HepG2 (cell line): ENCODE measurements at regions of chr16 and their contacts with region 1.

Region 1: DNA sequence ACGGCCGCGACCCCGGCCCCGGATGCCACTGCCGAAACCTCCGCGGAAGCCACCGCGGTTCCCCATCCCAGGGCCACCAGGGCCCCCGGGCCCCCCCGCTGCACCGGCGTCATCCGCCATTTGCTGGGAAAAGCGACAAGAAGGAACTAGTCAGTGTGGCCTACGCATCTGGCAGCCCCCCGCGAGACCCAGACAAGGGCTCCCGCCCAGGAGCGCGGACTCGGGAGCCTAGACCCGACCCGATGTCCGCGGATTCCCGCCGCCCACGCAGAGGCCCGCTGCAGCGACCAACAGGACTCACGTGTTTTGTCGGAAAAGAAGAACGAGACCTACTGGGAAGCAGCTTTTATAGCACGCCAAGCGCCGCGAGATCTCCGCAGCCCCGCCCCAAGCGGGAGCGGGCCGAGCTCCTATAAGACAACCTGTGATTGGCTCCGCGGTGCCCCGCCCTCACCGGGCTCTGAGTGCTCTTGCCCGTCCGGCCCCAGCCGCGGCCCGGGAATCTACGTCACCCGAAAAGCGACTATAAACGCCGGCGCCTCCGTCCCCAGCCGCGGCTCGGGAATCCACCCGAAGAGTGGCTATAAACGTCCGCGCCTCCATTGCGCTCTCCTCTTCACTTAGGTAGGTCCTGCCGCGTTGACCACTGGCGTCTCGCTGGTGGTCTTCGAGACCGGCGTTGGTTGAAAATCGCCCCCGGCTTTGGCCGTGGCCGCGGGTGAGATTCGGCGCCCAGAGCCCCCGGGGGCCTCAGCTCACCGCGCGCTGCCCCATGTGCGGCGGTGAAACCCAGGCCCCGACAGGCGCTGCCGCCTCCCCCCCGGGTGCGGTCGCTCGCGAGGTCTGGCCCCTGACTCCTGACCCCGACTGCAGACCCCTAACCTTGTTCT is at the start of gene RPS2:
- DNase-seq: peak; percentile 97
- ATAC-seq: peak; percentile 61
- H3K4me3 ChIP-seq: peak within 1 kb of the TSS; percentile 84 to 94 (median 92)
- H3K27ac ChIP-seq: peak within 1 kb of the TSS; percentile 88
- H3K4me1 ChIP-seq: peaks cover 44% of the 10 kb centered on the region
- H3K27me3 ChIP-seq: no peaks in the 10 kb centered on the region; a peak in 1 of 5 replicates
- CTCF ChIP-seq: peak; percentile 2; the same call in 1 of the 2 replicates
- EP300 ChIP-seq: peak in 1 of 2 experiments; percentile 26; a peak in 1 of 4 replicates
- POLR2A ChIP-seq: peak; percentile 100
- RAD21 ChIP-seq: peak; percentile 25
- total RNA-seq, gene RPS2: 1,908 and 1,988 TPM in 2 replicates

Region 2: GRCh38 chr16:1826691-1827575 is 137.8 kb before region 1 on chr16 and contains the starts of genes FAHD1 and HAGH:
- CTCF ChIA-PET with region 1: no interaction called
- POLR2A ChIA-PET with region 1: interaction called, 13 read pairs
- in situ Hi-C with region 1: no loop called
- intact Hi-C with region 1: no loop called
- DNase-seq: peak; percentile 88
- ATAC-seq: peak; percentile 77
- H3K4me3 ChIP-seq: peak within 1 kb of the TSS; percentile 72 to 97 (median 92)
- H3K27ac ChIP-seq: peak within 1 kb of the TSS; percentile 93
- H3K4me1 ChIP-seq: peaks cover 54% of the 10 kb centered on the region
- H3K27me3 ChIP-seq: no peaks in the 10 kb centered on the region; a peak in 1 of 5 replicates
- CTCF ChIP-seq: 0 out of 2 replicates have a peak, but pooled peaks have one; percentile 3
- EP300 ChIP-seq: peak; percentile 35 to 36; a peak in 2 of 4 replicates
- POLR2A ChIP-seq: peak; percentile 84 to 90
- RAD21 ChIP-seq: no peak; the same call in none of the 2 replicates
- total RNA-seq, gene FAHD1: 45.3 and 55.1 TPM in 2 replicates
- total RNA-seq, gene HAGH: 55.6 and 70.4 TPM in 2 replicates

Region 3: DNA sequence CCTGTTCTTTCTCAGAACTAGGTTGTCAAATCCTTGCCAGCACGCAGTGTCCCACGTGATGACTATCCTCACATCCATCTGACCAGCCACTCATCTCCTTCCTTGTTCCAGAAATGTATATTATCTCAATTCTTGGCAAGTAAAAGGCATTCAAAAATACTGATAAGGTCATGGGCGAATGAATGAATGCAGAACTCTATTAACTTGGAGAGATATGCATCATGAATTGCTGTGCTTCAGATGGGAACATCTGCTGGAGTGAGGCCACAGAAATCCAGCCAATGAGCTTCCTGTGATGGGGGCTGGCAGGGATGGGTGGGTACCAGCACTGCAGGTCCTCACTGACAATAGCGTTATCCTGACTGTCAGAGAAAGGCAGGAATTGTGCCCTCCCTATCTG is 118.8 kb before region 1 on chr16:
- CTCF ChIA-PET with region 1: no interaction called
- POLR2A ChIA-PET with region 1: no interaction called
- in situ Hi-C with region 1: no loop called
- intact Hi-C with region 1: no loop called
- DNase-seq: no peak
- ATAC-seq: no peak
- H3K4me3 ChIP-seq: no peak overlapping the region
- H3K27ac ChIP-seq: no peak overlapping the region
- H3K4me1 ChIP-seq: peaks cover 3% of the 10 kb centered on the region
- H3K27me3 ChIP-seq: no peaks in the 10 kb centered on the region
- CTCF ChIP-seq: no peak
- EP300 ChIP-seq: no peak
- POLR2A ChIP-seq: no peak
- RAD21 ChIP-seq: no peak

Region 4: GRCh38 chr16:1942810-1943726 is 21.7 kb before region 1 on chr16 and contains the start of gene MSRB1:
- CTCF ChIA-PET with region 1: no interaction called
- POLR2A ChIA-PET with region 1: interaction called, 139 read pairs
- in situ Hi-C with region 1: no loop called
- intact Hi-C with region 1: loop called (anchors 2 kb)
- DNase-seq: peak; percentile 98
- ATAC-seq: peak; percentile 56
- H3K4me3 ChIP-seq: peak within 1 kb of the TSS; percentile 93 to 97 (median 96)
- H3K27ac ChIP-seq: peak within 1 kb of the TSS; percentile 96
- H3K4me1 ChIP-seq: peaks cover 68% of the 10 kb centered on the region
- H3K27me3 ChIP-seq: peaks cover 0 to 5% of the 10 kb centered on the region in 2 experiments; a peak in 1 of 5 replicates
- CTCF ChIP-seq: peak; percentile 19; the same call in 1 of the 2 replicates
- EP300 ChIP-seq: no peak
- POLR2A ChIP-seq: peak; percentile 95
- RAD21 ChIP-seq: no peak
- total RNA-seq, gene MSRB1: 32.1 and 49.0 TPM in 2 replicates

Region 5: GRCh38 chr16:1983544-1984346 is 19.0 kb after region 1 on chr16 and contains the start of gene GFER:
- CTCF ChIA-PET with region 1: no interaction called
- POLR2A ChIA-PET with region 1: interaction called, 62 read pairs
- in situ Hi-C with region 1: no loop called
- intact Hi-C with region 1: no loop called
- DNase-seq: peak; percentile 81
- ATAC-seq: peak; percentile 82
- H3K4me3 ChIP-seq: peak within 1 kb of the TSS; percentile 81 to 93 (median 84)
- H3K27ac ChIP-seq: peak within 1 kb of the TSS; percentile 97
- H3K4me1 ChIP-seq: peaks cover 54% of the 10 kb centered on the region
- H3K27me3 ChIP-seq: no peaks in the 10 kb centered on the region
- CTCF ChIP-seq: peak; percentile 72
- EP300 ChIP-seq: peak; percentile 9 to 38; a peak in 2 of 4 replicates
- POLR2A ChIP-seq: peak; percentile 58 to 63
- RAD21 ChIP-seq: 0 out of 2 replicates have a peak, but pooled peaks have one; percentile 16
- total RNA-seq, gene GFER: 68.3 and 71.7 TPM in 2 replicates

Region 6: GRCh38 chr16:2003827-2004641 is 39.3 kb after region 1 on chr16:
- CTCF ChIA-PET with region 1: no interaction called
- POLR2A ChIA-PET with region 1: interaction called, 27 read pairs
- in situ Hi-C with region 1: no loop called
- intact Hi-C with region 1: no loop called
- DNase-seq: peak; percentile 92
- ATAC-seq: peak; percentile 89
- H3K4me3 ChIP-seq: peak overlapping the region in 1 of 3 experiments; percentile 17; a peak in 1 of 6 replicates
- H3K27ac ChIP-seq: peak overlapping the region; percentile 1
- H3K4me1 ChIP-seq: peaks cover 42% of the 10 kb centered on the region
- H3K27me3 ChIP-seq: no peaks in the 10 kb centered on the region
- CTCF ChIP-seq: peak; percentile 96
- EP300 ChIP-seq: no peak
- POLR2A ChIP-seq: no peak
- RAD21 ChIP-seq: peak; percentile 91

Region 7: GRCh38 chr16:2047330-2048115 is 82.8 kb after region 1 on chr16 and contains the starts of genes NTHL1 and TSC2:
- CTCF ChIA-PET with region 1: no interaction called
- POLR2A ChIA-PET with region 1: interaction called, 10 read pairs
- in situ Hi-C with region 1: no loop called
- intact Hi-C with region 1: no loop called
- DNase-seq: peak; percentile 93
- ATAC-seq: peak; percentile 91
- H3K4me3 ChIP-seq: peak within 1 kb of the TSS; percentile 86 to 95 (median 90)
- H3K27ac ChIP-seq: peak within 1 kb of the TSS; percentile 63
- H3K4me1 ChIP-seq: peaks cover 25% of the 10 kb centered on the region
- H3K27me3 ChIP-seq: peaks cover 0 to 2% of the 10 kb centered on the region in 2 experiments; a peak in 1 of 5 replicates
- CTCF ChIP-seq: peak; percentile 54
- EP300 ChIP-seq: 0 out of 4 replicates have a peak, but pooled peaks of 1 of the 2 experiments have one; percentile 24
- POLR2A ChIP-seq: peak in 1 of 2 experiments; percentile 68; a peak in 1 of 4 replicates
- RAD21 ChIP-seq: peak; percentile 53
- total RNA-seq, gene NTHL1: 64.8 and 64.9 TPM in 2 replicates
- total RNA-seq, gene TSC2: 10.3 and 19.6 TPM in 2 replicates